ENCODE measurements at regions of chr14 and their contacts with region 1.

Region 1: GRCh38 chr14:59189786-59190771 is 1.6 kb downstream of the DAAM1 start:
- DNase-seq: peak; percentile 81
- H3K4me3 ChIP-seq: peak overlapping the region; percentile 97
- H3K27ac ChIP-seq: peak overlapping the region; percentile 96
- H3K4me1 ChIP-seq: peaks cover 76% of the 10 kb centered on the region
- H3K27me3 ChIP-seq: no peaks in the 10 kb centered on the region
- CTCF ChIP-seq: no peak

Region 2: GRCh38 chr14:59254146-59254941 is 64.3 kb after region 1 on chr14:
- intact Hi-C with region 1: loop called (anchors 10 kb)
- DNase-seq: peak; percentile 74
- H3K4me3 ChIP-seq: peak overlapping the region; percentile 14
- H3K27ac ChIP-seq: peak overlapping the region; percentile 93
- H3K4me1 ChIP-seq: peaks cover 88% of the 10 kb centered on the region
- H3K27me3 ChIP-seq: no peaks in the 10 kb centered on the region
- CTCF ChIP-seq: peak; percentile 23

Region 3: GRCh38 chr14:59619061-59619460 is 429.0 kb after region 1 on chr14:
- intact Hi-C with region 1: no loop called
- DNase-seq: no peak
- H3K4me3 ChIP-seq: no peak overlapping the region
- H3K27ac ChIP-seq: no peak overlapping the region
- H3K4me1 ChIP-seq: no peaks in the 10 kb centered on the region
- H3K27me3 ChIP-seq: no peaks in the 10 kb centered on the region
- CTCF ChIP-seq: no peak